ENCODE measurements at regions of chr5 and their contacts with region 1.

Region 1: GRCh38 chr5:122845229-122846050 is at the start of gene SNX24:
- DNase-seq: peak; percentile 78 to 89
- H3K4me3 ChIP-seq: peak within 1 kb of the TSS; percentile 76 to 84
- H3K27ac ChIP-seq: peak within 1 kb of the TSS; percentile 83 to 89
- H3K4me1 ChIP-seq: peaks cover 0 to 33% (median 14%) of the 10 kb centered on the region in 4 donors
- H3K27me3 ChIP-seq: no peaks in the 10 kb centered on the region
- CTCF ChIP-seq: no peak

Region 2: GRCh38 chr5:122690266-122690665 is 155.2 kb before region 1 on chr5:
- intact Hi-C with region 1: no loop called
- DNase-seq: no peak
- H3K4me3 ChIP-seq: no peak overlapping the region
- H3K27ac ChIP-seq: no peak overlapping the region
- H3K4me1 ChIP-seq: no peaks in the 10 kb centered on the region
- H3K27me3 ChIP-seq: no peaks in the 10 kb centered on the region
- CTCF ChIP-seq: no peak

Region 3: GRCh38 chr5:122774861-122775549 is 70.4 kb before region 1 on chr5 and contains the start of gene SNX2:
- intact Hi-C with region 1: loop called (anchors 10 kb)
- DNase-seq: peak; percentile 95 to 97
- H3K4me3 ChIP-seq: peak within 1 kb of the TSS; percentile 93 to 94
- H3K27ac ChIP-seq: peak within 1 kb of the TSS; percentile 93 to 94
- H3K4me1 ChIP-seq: peaks cover 0 to 49% (median 12%) of the 10 kb centered on the region in 4 donors
- H3K27me3 ChIP-seq: no peaks in the 10 kb centered on the region
- CTCF ChIP-seq: peak; percentile 11 to 26

Region 4: GRCh38 chr5:122942164-122942914 is 96.9 kb after region 1 on chr5:
- intact Hi-C with region 1: no loop called
- DNase-seq: no peak
- H3K4me3 ChIP-seq: no peak overlapping the region
- H3K27ac ChIP-seq: no peak overlapping the region
- H3K4me1 ChIP-seq: peaks cover 0 to 18% (median 11%) of the 10 kb centered on the region in 4 donors
- H3K27me3 ChIP-seq: no peaks in the 10 kb centered on the region
- CTCF ChIP-seq: no peak

Region 5: DNA sequence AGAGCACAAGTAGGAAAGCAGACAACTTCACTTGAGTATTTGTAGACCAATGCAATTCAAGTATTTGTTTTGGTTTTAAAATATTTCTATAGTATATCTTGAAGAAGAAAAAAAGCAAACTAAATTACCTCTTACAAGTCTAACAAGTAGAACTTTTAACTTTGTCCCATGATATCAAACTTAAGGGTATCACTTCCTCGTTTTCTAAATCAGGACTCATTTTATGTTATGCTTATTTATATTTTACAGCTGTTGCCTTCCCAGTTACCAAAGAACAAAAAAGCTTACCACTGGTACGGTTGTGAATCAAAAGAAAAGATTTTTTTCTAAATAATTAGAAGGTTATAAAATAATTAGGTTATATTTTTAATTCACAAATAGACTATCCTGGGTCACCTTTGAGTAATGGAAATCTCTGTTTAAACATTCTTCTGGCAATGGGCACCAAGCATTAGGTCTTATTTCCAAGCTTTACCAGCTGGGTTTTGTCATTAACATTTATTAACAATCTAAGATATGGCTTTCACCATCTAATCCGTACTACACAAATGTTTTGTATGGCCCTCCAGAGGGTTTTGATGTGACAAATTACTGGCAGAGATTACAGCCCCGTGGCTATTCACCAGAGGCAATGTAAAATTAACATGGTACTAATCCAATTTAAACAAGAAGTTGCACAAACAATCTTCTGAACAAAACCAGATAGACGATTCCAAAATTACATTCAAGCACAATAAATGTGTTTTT is 514.2 kb after region 1 on chr5:
- intact Hi-C with region 1: loop called (anchors 5 kb)
- DNase-seq: peak; percentile 49 to 66
- H3K4me3 ChIP-seq: no peak overlapping the region
- H3K27ac ChIP-seq: peak overlapping the region; percentile 57 to 58
- H3K4me1 ChIP-seq: peaks cover 0 to 63% (median 10%) of the 10 kb centered on the region in 4 donors
- H3K27me3 ChIP-seq: no peaks in the 10 kb centered on the region
- CTCF ChIP-seq: no peak

Measured in tibial artery (tissue), 4 donors.